Activated CD4-positive, alpha-beta T cell treated with anti-CD3 and anti-CD28 coated beads, Interleukin-2, amount 10 ng/mL, durations not matched to agents 24 days and 14 days (primary cell): ENCODE measurements at regions of chr6 and their contacts with region 1.

Region 1: GRCh38 chr6:127484212-127484858 is 25.1 kb upstream of the KIAA0408 start:
- DNase-seq: peak; percentile 75
- H3K4me3 Mint-ChIP-seq: peak overlapping the region; percentile 68
- H3K27ac Mint-ChIP-seq: peak overlapping the region; percentile 70
- H3K4me1 Mint-ChIP-seq: peaks cover 39% of the 10 kb centered on the region
- H3K27me3 Mint-ChIP-seq: no peaks in the 10 kb centered on the region

Region 2: GRCh38 chr6:125732398-125732797 is 1751.9 kb before region 1 on chr6:
- intact Hi-C with region 1: no loop called
- DNase-seq: no peak
- H3K4me3 Mint-ChIP-seq: no peak overlapping the region
- H3K27ac Mint-ChIP-seq: no peak overlapping the region
- H3K4me1 Mint-ChIP-seq: no peaks in the 10 kb centered on the region
- H3K27me3 Mint-ChIP-seq: peaks cover 59% of the 10 kb centered on the region

Region 3: GRCh38 chr6:126926926-126927325 is 557.4 kb before region 1 on chr6:
- intact Hi-C with region 1: no loop called
- DNase-seq: no peak
- H3K4me3 Mint-ChIP-seq: no peak overlapping the region
- H3K27ac Mint-ChIP-seq: no peak overlapping the region
- H3K4me1 Mint-ChIP-seq: no peaks in the 10 kb centered on the region
- H3K27me3 Mint-ChIP-seq: no peaks in the 10 kb centered on the region

Region 4: DNA sequence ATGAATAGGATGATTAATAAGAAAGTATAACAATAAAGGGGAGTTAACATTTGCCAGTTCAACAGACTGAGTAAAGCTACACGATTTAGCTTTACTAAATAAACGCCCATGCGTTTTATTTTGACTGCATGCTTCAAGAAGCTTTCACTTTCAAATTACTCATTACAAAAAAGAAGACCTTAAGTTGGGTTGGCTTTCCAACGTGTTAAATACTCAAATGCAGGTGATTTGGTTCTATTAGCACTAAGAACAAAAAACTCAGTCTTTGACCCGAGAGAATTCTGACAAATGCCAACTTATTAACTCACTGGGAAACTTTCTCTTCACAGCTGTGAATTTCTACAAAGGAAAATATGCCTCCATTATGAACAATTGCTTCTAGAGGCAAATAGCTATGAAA is 192.8 kb before region 1 on chr6:
- intact Hi-C with region 1: loop called (anchors 2 kb)
- DNase-seq: no peak
- H3K4me3 Mint-ChIP-seq: peak overlapping the region; percentile 20
- H3K27ac Mint-ChIP-seq: peak overlapping the region; percentile 76
- H3K4me1 Mint-ChIP-seq: peaks cover 26% of the 10 kb centered on the region
- H3K27me3 Mint-ChIP-seq: no peaks in the 10 kb centered on the region

Region 5: DNA sequence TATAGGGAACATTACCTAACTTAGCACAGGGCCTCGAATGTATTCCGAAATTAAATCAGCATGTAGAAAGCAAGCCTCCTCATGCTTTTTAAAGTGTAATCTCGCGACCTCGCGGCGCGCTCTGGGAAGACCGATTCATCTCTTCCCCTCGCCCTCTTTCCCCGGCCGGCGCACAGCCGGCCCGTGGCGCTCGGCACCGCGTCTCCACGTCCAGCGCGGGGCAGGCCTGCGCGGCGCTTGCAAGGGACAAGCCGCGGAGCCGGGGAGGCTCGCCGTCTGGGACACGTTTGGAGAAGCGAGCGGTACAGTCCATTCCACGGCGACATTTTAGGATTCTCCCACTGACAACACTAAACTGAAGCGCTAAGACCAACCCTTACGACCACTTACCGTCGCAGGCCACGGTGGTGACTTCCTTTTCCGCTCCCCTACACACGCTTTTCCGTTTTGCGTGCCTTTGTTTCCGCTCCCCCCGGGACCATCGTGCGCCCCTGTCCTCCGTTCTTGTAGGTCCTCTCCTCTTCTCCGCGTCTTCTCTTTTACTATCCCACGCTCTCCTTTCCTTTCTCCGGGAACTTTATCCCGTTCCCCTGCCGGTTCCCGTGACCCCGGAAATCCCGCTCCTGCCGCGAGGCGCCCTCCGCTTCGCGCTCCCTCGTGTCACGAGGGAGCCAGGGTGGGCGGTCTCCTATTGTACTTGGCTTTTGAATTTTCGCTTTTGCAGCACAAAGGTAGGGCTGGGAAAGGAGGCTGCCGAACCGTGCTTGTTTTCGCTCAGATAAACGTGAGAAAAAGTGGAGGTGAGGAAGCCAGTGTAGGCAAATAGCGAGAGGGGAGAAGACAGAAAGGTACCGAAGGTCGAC is 141.2 kb before region 1 on chr6 and contains the start of gene ECHDC1:
- intact Hi-C with region 1: loop called (anchors 1 kb)
- DNase-seq: peak; percentile 91
- H3K4me3 Mint-ChIP-seq: no peak within 1 kb of the TSS
- H3K27ac Mint-ChIP-seq: no peak within 1 kb of the TSS
- H3K4me1 Mint-ChIP-seq: peaks cover 18% of the 10 kb centered on the region
- H3K27me3 Mint-ChIP-seq: no peaks in the 10 kb centered on the region
- total RNA-seq, gene ECHDC1: 60.2 and 63.1 TPM in 2 replicates

Region 6: GRCh38 chr6:127420556-127420955 is 63.8 kb before region 1 on chr6:
- intact Hi-C with region 1: loop called (anchors 1 kb)
- DNase-seq: peak; percentile 92
- H3K4me3 Mint-ChIP-seq: peak overlapping the region; percentile 51
- H3K27ac Mint-ChIP-seq: peak overlapping the region; percentile 86
- H3K4me1 Mint-ChIP-seq: peaks cover 12% of the 10 kb centered on the region
- H3K27me3 Mint-ChIP-seq: no peaks in the 10 kb centered on the region

Region 7: DNA sequence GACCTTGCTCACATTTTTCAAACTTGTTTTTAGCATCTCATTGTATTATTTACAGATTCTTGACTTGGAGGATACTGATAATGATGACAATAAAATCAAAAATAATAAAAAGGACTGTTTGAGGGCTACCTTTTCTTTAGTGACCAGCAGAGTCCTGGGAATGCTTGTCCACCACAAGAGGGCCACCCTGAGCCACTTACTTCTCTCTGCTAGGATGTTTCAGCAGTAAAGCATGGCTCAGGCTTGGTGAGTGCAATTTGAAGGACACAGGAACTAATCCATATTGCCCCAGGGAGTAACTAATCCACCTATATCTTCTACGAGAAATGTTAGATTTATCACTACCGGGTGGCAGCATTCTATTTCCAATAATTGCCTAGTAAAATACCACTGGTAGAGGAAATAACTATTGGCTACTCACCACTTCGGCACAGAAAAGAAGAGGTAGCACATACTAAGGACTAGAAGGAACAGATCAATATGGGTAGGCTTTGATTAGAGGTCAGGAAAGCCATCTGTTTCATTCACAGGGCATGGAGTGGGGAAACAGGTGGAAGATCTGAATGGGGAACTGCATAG is 19.4 kb before region 1 on chr6:
- intact Hi-C with region 1: loop called (anchors 1 kb)
- DNase-seq: peak; percentile 88
- H3K4me3 Mint-ChIP-seq: no peak overlapping the region
- H3K27ac Mint-ChIP-seq: no peak overlapping the region
- H3K4me1 Mint-ChIP-seq: peaks cover 8% of the 10 kb centered on the region
- H3K27me3 Mint-ChIP-seq: no peaks in the 10 kb centered on the region

Region 8: DNA sequence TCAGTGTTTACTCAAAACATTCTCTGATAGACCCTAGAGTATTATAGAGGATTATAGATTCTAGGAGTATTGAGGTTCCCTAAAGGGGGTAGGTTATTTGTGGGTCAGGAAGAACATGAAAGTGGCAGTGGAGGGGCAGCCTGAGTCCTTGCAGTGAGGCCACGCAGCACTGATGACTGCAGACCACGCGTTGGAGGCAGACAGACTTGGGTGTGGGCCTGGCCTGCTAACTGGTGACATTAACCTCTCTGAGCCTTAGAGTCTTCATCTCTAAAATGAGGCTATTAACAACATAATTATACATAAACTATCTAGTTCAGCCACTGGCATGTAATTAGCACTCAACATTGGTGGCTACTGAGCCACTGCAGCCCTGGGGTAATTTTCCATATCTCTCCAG is 18.7 kb after region 1 on chr6:
- intact Hi-C with region 1: loop called (anchors 2 kb)
- DNase-seq: no peak
- H3K4me3 Mint-ChIP-seq: no peak overlapping the region
- H3K27ac Mint-ChIP-seq: no peak overlapping the region
- H3K4me1 Mint-ChIP-seq: peaks cover 3% of the 10 kb centered on the region
- H3K27me3 Mint-ChIP-seq: no peaks in the 10 kb centered on the region